ENCODE measurements at regions of chr6 and their contacts with region 1.

Region 1: DNA sequence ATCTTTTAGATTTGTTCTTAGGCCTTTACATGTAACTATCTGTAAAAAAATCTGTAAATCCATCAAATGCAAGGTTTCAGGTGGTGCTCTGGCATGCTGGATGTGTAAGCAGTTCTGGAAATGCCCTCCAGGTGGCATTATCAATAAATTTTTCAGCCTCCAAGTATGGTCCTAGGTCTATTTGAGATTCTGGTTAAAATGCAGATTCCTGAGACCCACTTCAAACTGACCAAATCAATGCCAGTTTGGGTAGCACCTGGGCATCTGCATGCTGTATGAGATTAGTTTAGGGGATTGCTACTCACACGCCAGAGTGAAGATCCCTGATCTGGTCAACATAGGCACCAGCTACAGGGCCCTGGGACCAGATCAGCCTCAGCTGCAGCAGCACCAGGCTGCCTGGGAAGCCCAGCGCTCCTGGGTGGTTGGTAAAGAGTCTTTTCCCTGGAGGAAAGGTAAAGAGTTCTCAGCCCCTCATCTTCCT is 507.3 kb upstream of the CITED2 start:
- H3K4me3 Mint-ChIP-seq: peak overlapping the region; percentile 18
- H3K27ac Mint-ChIP-seq: peak overlapping the region; percentile 88
- H3K4me1 Mint-ChIP-seq: peaks cover 53% of the 10 kb centered on the region
- H3K27me3 Mint-ChIP-seq: no peaks in the 10 kb centered on the region

Region 2: DNA sequence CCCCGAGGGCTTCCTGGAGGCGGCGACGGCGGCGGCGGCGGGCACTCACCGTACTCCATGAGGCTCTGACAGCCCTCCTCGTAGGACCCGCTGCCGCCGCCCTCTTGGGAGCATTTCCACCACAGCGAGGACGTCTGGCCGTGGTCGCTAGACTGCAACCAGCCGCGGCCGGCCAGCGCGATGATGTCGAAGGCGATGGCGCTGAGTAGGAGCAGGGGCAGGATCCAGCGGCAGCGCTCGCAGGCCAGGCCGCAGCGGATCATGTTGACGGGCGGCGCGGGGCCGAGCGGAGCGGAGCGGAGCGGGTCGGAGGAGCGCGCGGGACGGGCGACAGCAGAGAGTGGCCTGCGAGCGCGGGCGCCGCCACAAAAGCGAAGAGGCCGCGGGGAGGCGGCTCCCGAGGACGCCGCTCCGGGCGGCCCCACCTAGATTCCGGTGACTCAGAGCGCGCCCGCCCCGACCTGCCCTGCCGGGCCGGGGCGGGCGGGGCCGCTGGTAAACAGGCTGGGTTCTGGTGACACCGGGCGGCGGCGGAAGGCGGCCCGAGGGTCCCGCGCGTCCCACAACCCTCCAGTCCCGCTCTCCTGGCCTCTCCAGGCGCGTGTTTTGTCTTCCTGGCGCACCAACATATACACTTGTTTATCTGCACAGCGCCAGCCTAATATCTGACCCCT is 1774.6 kb before region 1 on chr6 and contains the start of gene PERP:
- intact Hi-C with region 1: no loop called
- H3K4me3 Mint-ChIP-seq: peak within 1 kb of the TSS; percentile 88
- H3K27ac Mint-ChIP-seq: peak within 1 kb of the TSS; percentile 57
- H3K4me1 Mint-ChIP-seq: peaks cover 16% of the 10 kb centered on the region
- H3K27me3 Mint-ChIP-seq: peaks cover 58% of the 10 kb centered on the region

Region 3: DNA sequence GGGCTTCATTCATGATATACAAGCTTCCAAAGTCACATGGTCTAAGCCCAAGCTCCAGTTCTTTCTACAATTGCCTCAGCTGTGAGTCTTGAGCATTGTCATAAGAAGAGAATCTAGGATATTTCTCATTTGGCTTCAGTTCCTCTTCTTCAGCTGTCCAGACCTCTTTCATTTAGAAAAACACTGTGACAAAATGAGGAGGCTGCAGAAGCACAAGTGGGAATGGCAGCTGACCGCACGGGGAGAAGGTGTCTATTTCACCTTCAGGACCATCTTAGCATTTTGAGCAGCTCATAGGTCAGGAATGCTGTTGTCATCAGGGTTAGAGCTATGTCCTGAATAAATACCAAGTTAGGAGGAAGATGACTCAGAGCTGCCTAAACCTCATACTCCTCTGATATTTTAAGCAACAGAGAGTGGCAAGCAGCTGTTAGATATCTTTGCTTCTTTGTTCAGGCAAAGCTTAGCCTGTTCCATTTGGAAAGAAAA is 117.2 kb before region 1 on chr6:
- intact Hi-C with region 1: loop called (anchors 5 kb)
- H3K4me3 Mint-ChIP-seq: peak overlapping the region; percentile 58
- H3K27ac Mint-ChIP-seq: peak overlapping the region; percentile 94
- H3K4me1 Mint-ChIP-seq: peaks cover 30% of the 10 kb centered on the region
- H3K27me3 Mint-ChIP-seq: no peaks in the 10 kb centered on the region

Region 4: GRCh38 chr6:139829576-139829975 is 52.2 kb before region 1 on chr6:
- intact Hi-C with region 1: no loop called
- H3K4me3 Mint-ChIP-seq: no peak overlapping the region
- H3K27ac Mint-ChIP-seq: no peak overlapping the region
- H3K4me1 Mint-ChIP-seq: peaks cover 9% of the 10 kb centered on the region
- H3K27me3 Mint-ChIP-seq: no peaks in the 10 kb centered on the region

Region 5: DNA sequence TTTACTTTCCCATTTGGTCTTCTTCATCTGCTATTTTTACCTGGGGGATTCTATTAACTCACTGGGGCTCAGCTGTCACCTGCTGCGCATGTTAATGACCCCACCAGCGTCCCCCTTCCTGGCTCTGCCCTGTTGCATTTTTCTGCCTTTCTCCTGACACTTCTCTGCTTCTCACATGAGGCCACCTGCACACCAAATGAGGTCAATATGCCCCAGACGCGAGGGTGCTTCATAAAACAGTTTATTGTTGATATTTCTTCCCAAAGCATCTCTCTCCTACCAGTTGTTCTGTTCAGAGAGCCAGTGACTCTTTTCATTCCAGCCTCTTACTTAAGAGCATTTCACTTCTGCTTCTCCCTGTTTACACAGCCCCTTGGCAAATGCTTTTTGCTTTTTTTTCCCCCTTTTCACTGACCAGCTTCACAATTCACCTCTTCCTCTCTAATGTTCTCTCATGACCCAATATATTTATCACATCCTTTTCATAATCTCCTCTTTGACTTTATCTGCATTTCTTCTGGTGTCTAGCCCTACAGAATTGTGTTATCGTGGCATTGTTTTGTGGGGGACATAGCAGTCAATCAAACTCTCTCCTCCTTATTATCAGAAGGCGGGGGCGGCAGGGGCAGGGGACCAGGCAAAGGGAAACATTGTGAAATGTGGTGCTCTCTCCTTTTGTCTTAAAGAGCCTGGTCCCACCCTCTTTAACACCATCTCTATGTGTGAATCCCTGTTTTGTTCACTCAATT is 38.4 kb after region 1 on chr6:
- intact Hi-C with region 1: loop called (anchors 5 kb)
- H3K4me3 Mint-ChIP-seq: peak overlapping the region; percentile 73
- H3K27ac Mint-ChIP-seq: peak overlapping the region; percentile 91
- H3K4me1 Mint-ChIP-seq: peaks cover 53% of the 10 kb centered on the region
- H3K27me3 Mint-ChIP-seq: no peaks in the 10 kb centered on the region

Region 6: GRCh38 chr6:140039364-140039763 is 157.6 kb after region 1 on chr6:
- intact Hi-C with region 1: loop called (anchors 10 kb)
- H3K4me3 Mint-ChIP-seq: no peak overlapping the region
- H3K27ac Mint-ChIP-seq: peak overlapping the region; percentile 32
- H3K4me1 Mint-ChIP-seq: peaks cover 40% of the 10 kb centered on the region
- H3K27me3 Mint-ChIP-seq: no peaks in the 10 kb centered on the region

Region 7: DNA sequence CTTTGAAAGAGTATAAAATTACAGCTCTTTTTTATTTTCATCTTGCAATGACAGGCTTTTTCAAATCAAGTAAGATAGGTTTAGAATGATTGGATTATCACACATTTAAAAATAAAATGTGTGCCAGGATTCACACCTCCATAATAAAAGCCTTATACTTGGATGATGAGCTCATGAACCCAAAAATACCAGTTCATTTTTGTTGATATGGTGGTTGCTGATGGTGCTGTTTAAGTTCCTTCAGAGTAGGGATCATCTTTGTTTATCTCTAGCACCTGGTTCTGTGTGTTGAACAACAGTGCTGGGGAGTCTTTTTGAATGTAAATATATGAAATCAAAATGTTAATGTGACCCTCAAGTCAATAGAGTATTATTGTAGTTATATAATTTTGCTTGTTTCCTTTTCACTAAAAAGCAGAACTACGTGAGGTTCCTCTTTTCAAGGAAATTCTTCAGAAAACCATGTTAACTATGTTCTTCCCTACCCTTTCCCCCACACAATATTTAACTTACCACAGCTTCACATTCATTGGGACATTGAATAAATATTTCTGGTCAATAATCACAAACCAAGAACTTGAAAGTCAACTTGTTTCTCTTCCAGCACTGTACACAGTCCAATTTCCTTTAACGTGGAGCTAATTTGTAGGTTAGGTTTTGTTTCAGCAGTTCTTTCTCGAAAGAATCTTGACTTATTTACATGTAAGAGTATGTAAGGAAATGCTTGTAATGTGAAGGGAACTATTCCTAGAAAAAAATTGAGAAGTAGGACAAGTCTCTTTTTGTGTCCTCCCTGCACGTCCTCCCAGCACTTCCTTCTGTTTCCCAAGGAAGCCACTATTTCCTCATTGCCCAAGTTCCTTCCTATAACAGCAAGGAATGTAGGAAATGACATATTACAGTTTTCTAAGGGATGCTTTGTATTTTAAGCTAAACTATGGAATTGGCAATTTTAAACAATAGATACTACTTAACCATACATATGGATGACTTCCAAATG is 438.6 kb after region 1 on chr6:
- intact Hi-C with region 1: loop called (anchors 5 kb)
- H3K4me3 Mint-ChIP-seq: peak overlapping the region; percentile 39
- H3K27ac Mint-ChIP-seq: peak overlapping the region; percentile 89
- H3K4me1 Mint-ChIP-seq: peaks cover 23% of the 10 kb centered on the region
- H3K27me3 Mint-ChIP-seq: no peaks in the 10 kb centered on the region

Region 8: DNA sequence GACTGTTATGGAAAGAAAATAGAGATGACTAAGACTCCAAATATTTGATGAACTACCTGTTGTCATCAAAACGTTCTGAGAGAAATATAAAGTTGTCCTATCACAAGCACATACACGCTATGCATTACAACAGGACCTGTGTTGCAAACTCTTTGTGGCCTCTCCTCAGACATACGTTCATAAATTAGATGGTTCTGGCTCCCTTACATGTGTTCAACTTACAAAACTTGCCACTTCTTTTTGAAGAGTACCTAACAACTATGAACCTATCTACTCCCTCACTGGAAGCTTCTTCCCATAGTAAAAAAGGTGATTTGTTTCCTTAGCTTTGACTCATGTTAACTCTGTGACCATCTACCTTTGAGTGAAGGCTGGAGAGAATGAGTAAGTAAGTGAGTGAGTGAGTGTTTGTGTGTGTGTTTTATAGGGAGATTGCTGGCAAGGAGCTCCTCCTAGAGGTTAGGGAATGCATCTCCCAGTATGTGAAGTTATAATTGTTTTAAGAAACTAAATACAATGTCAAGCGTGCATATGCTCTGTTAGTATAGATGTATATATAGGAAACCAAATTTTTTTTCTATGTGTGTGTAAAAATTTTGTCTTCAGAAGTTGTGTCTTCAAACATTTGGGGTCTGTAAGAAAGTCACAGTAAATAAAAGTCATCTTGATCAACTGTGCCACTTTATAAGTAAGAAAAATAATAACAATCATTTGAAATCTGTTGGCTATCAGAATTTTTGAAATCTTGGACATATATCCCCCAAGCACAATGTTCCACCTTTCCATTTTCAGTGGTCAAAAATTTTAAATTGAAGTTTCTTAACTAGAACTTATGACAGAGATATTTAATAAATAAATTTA is 1039.8 kb after region 1 on chr6:
- intact Hi-C with region 1: loop called (anchors 10 kb)
- H3K4me3 Mint-ChIP-seq: no peak overlapping the region
- H3K27ac Mint-ChIP-seq: no peak overlapping the region
- H3K4me1 Mint-ChIP-seq: no peaks in the 10 kb centered on the region
- H3K27me3 Mint-ChIP-seq: no peaks in the 10 kb centered on the region